Heart right ventricle (tissue), 16 donors: ENCODE measurements at regions of chr7 and their contacts with region 1.

Region 1: GRCh38 chr7:141301544-141301943 is 227.7 kb downstream of the TMEM178B start:
- DNase-seq: no peak
- ATAC-seq: peak; percentile 44 to 88 (median 73)
- H3K4me3 ChIP-seq: peak overlapping the region in 4 of 10 donors; percentile 8 to 23 (median 20)
- H3K27ac ChIP-seq: peak overlapping the region in 9 of 10 donors; percentile 55 to 91 (median 80)
- H3K4me1 ChIP-seq: peaks cover 0 to 52% (median 9%) of the 10 kb centered on the region in 9 donors
- H3K27me3 ChIP-seq: no peaks in the 10 kb centered on the region
- CTCF ChIP-seq: no peak

Region 2: GRCh38 chr7:141328290-141328689 is 26.7 kb after region 1 on chr7:
- intact Hi-C with region 1: loop called in 1 of 10 experiments (anchors 1 kb)
- DNase-seq: no peak
- ATAC-seq: peak in 1 of 8 donors; percentile 55
- H3K4me3 ChIP-seq: no peak overlapping the region
- H3K27ac ChIP-seq: no peak overlapping the region
- H3K4me1 ChIP-seq: peaks cover 0 to 20% (median 7%) of the 10 kb centered on the region in 9 donors
- H3K27me3 ChIP-seq: no peaks in the 10 kb centered on the region
- CTCF ChIP-seq: no peak

Region 3: GRCh38 chr7:141362580-141363435 is 61.3 kb after region 1 on chr7:
- intact Hi-C with region 1: loop called in 4 of 10 experiments (anchors 2 to 5 kb)
- DNase-seq: peak in 1 of 2 donors; percentile 38
- ATAC-seq: peak in 6 of 8 donors; percentile 36 to 84 (median 58)
- H3K4me3 ChIP-seq: no peak overlapping the region
- H3K27ac ChIP-seq: peak overlapping the region in 9 of 10 donors; percentile 30 to 89 (median 68)
- H3K4me1 ChIP-seq: peaks cover 2 to 68% (median 37%) of the 10 kb centered on the region in 9 donors
- H3K27me3 ChIP-seq: no peaks in the 10 kb centered on the region
- CTCF ChIP-seq: no peak